BJ (cell line): ENCODE measurements at regions of chr7 and their contacts with region 1.

Region 1: GRCh38 chr7:73811760-73812168 is 19.0 kb upstream of the CLDN4 start:
- DNase-seq: no peak
- H3K4me3 ChIP-seq: no peak overlapping the region
- H3K27me3 ChIP-seq: no peaks in the 10 kb centered on the region
- CTCF ChIP-seq: peak; percentile 92

Region 2: DNA sequence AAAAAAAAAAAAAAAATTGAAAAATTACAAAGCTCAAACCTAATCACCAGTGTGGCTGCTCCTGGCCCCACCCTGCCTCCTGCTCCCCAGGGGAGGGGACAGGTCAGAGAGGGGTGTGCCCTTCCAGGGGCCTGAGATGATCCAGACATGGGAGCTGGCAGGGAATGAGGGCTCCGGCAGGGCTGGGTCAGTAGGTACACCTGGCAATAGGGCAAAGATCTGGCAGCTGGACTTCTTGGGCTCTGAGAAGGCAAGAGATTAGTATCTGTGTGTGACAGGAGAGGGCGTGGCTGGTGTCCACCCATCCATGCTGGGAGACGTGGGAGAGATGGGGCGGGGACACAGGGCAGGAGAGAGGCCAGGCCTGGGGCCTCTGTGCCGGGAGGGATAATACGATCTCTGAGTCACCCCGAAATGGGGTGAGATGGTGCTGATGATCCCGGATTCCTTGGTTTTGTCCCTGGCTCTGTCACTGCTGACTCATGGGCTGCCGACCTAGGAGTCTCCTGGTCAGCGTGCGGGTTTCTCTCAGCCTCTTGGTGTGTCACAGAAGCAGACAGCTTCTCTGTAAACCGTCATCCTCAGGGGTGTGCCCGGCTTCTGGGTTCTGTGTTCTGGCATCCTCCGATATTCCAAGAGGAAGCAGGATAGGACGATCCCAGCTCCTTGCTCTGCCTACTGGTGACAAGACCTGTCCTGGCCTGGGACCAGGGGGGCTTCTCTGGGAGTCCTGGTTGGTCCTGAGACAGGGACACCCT is 10.7 kb after region 1 on chr7:
- CTCF ChIA-PET with region 1: interaction called, 21 read pairs
- POLR2A ChIA-PET with region 1: interaction called, 5 read pairs
- DNase-seq: peak; percentile 95
- H3K4me3 ChIP-seq: no peak overlapping the region
- H3K27me3 ChIP-seq: no peaks in the 10 kb centered on the region
- CTCF ChIP-seq: no peak

Region 3: DNA sequence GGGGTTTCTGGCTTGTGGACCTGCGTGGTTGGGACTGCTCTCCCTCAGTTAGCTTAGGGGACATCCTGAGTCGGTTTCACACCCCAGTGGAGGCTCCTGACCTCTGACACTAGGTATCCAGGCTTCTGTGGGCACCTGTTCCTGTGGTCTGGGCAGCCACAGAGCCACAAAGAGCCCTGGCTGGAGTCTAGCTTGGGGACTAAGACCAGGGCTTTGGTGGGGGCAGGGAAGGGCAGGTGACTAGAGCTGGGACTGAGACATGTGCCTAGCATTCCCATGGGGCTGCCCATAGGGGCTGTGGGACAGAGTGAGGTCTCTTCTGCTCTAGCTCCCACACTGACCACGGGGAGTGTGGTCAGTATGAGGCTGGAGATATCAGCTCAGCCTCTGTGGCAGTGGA is 45.2 kb after region 1 on chr7:
- CTCF ChIA-PET with region 1: interaction called, 58 read pairs
- POLR2A ChIA-PET with region 1: interaction called, 3 read pairs
- DNase-seq: no peak
- H3K4me3 ChIP-seq: no peak overlapping the region
- H3K27me3 ChIP-seq: no peaks in the 10 kb centered on the region; the same call in 1 of the 2 replicates
- CTCF ChIP-seq: no peak